ENCODE measurements at regions of chr7 and their contacts with region 1.

Region 1: DNA sequence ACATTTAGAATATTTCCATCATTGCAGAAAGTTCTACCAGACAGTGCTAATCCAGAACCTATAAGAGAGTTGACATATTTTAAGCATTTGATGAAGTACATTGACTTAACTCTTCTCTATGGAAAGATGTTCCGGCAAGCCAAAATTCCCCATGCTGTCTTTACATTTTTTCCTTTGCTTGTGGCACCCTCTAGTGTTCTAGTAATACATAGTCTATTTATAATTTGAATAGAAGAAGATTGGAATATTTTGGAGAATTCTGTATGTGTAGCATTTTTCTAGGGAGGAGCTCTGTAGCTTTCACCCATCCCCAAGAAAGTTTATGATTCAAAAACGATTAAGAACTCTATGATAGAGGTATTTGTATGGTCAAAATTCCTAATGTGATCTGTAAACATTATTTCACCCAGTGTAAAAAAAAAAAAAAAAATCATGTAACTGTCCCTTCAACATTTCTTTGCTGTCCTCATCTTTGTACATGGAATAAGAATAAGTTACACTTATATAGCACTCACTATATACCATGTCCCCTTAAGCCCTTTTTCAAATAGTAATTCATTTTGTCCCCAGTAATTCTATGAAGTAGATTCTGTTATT is 33.2 kb downstream of the NRF1 start:
- DNase-seq: peak in 1 of 2 experiments; percentile 40
- H3K4me3 ChIP-seq: no peak overlapping the region
- H3K4me3 Mint-ChIP-seq: no peak overlapping the region
- H3K27ac Mint-ChIP-seq: no peak overlapping the region
- H3K4me1 ChIP-seq: no peaks in the 10 kb centered on the region
- H3K4me1 Mint-ChIP-seq: no peaks in the 10 kb centered on the region
- H3K27me3 ChIP-seq: no peaks in the 10 kb centered on the region
- H3K27me3 Mint-ChIP-seq: no peaks in the 10 kb centered on the region
- CTCF ChIP-seq: peak; percentile 49 to 51

Region 2: GRCh38 chr7:129315960-129316359 is 328.8 kb before region 1 on chr7:
- CTCF ChIA-PET with region 1: no interaction called
- POLR2A ChIA-PET with region 1: no interaction called
- intact Hi-C with region 1: no loop called
- DNase-seq: no peak
- H3K4me3 ChIP-seq: no peak overlapping the region
- H3K4me3 Mint-ChIP-seq: no peak overlapping the region
- H3K27ac Mint-ChIP-seq: no peak overlapping the region
- H3K4me1 ChIP-seq: no peaks in the 10 kb centered on the region
- H3K4me1 Mint-ChIP-seq: peaks cover 7% of the 10 kb centered on the region
- H3K27me3 ChIP-seq: no peaks in the 10 kb centered on the region
- H3K27me3 Mint-ChIP-seq: no peaks in the 10 kb centered on the region
- CTCF ChIP-seq: no peak

Region 3: GRCh38 chr7:129401967-129402860 is 242.5 kb before region 1 on chr7:
- CTCF ChIA-PET with region 1: no interaction called
- POLR2A ChIA-PET with region 1: no interaction called
- intact Hi-C with region 1: loop called (anchors 1 kb)
- DNase-seq: no peak
- H3K4me3 ChIP-seq: no peak overlapping the region
- H3K4me3 Mint-ChIP-seq: no peak overlapping the region
- H3K27ac Mint-ChIP-seq: no peak overlapping the region
- H3K4me1 ChIP-seq: no peaks in the 10 kb centered on the region; the same call in 1 of the 2 replicates
- H3K4me1 Mint-ChIP-seq: no peaks in the 10 kb centered on the region
- H3K27me3 ChIP-seq: no peaks in the 10 kb centered on the region
- H3K27me3 Mint-ChIP-seq: no peaks in the 10 kb centered on the region
- CTCF ChIP-seq: no peak

Region 4: DNA sequence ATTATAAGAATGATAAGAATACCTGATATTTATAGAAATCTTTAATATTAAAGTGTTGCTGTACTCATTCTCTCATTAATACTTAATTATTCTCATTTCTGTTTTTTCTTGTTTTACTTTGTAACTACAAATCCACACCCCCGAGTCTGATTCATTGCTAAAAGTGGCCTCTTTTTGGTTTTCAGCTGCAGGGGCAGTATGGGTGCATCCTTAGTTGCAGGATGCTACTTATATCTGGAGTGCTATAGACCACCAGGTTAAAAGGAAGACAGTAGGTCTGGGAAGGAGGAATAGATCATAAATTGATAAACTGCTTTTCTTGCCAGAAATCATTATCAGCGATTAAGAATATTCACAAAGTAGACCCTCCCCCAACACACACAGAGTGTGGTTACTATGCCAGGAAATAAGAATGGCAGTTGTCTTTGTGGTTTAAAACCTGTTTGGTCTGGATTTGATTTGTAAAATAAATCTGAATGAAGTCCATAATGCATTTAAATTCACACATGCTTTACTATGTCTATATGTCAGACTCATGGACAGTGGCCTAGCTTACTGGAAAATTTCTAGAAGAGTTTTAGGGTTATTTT is 63.3 kb after region 1 on chr7:
- CTCF ChIA-PET with region 1: no interaction called
- POLR2A ChIA-PET with region 1: no interaction called
- intact Hi-C with region 1: no loop called
- DNase-seq: no peak
- H3K4me3 ChIP-seq: no peak overlapping the region
- H3K4me3 Mint-ChIP-seq: no peak overlapping the region
- H3K27ac Mint-ChIP-seq: no peak overlapping the region
- H3K4me1 ChIP-seq: peaks cover 8% of the 10 kb centered on the region
- H3K4me1 Mint-ChIP-seq: peaks cover under 1% of the 10 kb centered on the region
- H3K27me3 ChIP-seq: no peaks in the 10 kb centered on the region
- H3K27me3 Mint-ChIP-seq: no peaks in the 10 kb centered on the region
- CTCF ChIP-seq: no peak